Activated naive CD8-positive, alpha-beta T cell treated with anti-CD3 and anti-CD28 coated beads, Interleukin-2, amount 10 ng/mL, durations not matched to agents 7 days and 5 days (primary cell): ENCODE measurements at regions of chr3 and their contacts with region 1.

Region 1: DNA sequence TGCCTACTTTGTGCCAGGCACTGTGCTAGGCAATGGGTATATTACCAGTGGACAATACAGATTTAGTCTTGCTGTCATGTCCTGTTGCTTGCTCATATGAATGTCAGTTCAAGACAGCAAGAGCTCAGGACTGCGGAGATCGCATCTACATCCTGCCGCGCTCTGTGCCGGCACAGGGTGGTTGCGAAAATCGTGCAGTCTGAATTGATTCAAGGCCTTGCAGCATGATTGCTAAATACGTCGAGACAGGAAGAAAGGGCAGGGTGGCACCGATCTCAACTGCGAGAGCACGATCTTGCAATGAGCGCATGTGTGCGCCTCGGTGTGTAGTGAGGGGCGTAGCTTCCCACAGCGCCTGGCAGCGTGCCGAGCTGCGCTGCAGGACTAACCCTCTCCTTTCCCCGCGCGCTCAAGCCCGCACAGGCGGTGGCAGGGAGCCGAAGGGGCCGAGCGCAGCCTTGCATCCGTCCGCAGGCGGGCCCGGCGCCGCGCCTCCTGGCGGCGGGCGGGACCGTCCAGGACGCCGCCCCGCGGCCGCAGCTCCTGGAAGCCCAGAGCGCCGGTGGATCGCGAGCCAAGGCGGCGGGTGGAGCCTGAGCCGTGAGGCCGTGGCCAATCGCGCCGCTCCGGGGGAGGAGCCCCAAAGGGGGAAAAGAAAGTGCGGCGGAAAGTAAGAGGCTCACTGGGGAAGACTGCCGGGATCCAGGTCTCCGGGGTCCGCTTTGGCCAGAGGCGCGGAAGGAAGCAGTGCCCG is at the start of gene IL1RAP:
- DNase-seq: peak; percentile 91
- ATAC-seq: peak; percentile 95
- H3K4me3 Mint-ChIP-seq: peak within 1 kb of the TSS; percentile 93
- H3K27ac Mint-ChIP-seq: peak within 1 kb of the TSS; percentile 94
- H3K4me1 Mint-ChIP-seq: peaks cover 25% of the 10 kb centered on the region
- H3K27me3 Mint-ChIP-seq: peaks cover 2% of the 10 kb centered on the region
- total RNA-seq, gene IL1RAP: 10.5 to 10.7 TPM

Region 2: GRCh38 chr3:190617185-190617584 is 103.6 kb after region 1 on chr3:
- POLR2A ChIA-PET with region 1: interaction called, 20 read pairs
- DNase-seq: no peak
- ATAC-seq: peak; percentile 9
- H3K4me3 Mint-ChIP-seq: peak overlapping the region; percentile 8
- H3K27ac Mint-ChIP-seq: peak overlapping the region; percentile 75
- H3K4me1 Mint-ChIP-seq: peaks cover 44% of the 10 kb centered on the region
- H3K27me3 Mint-ChIP-seq: no peaks in the 10 kb centered on the region

Region 3: GRCh38 chr3:190739641-190740185 is 226.1 kb after region 1 on chr3:
- POLR2A ChIA-PET with region 1: no interaction called
- DNase-seq: no peak
- ATAC-seq: no peak
- H3K4me3 Mint-ChIP-seq: no peak overlapping the region
- H3K27ac Mint-ChIP-seq: no peak overlapping the region
- H3K4me1 Mint-ChIP-seq: no peaks in the 10 kb centered on the region
- H3K27me3 Mint-ChIP-seq: no peaks in the 10 kb centered on the region